Heart left ventricle (tissue), 16 donors: ENCODE measurements at regions of chr17 and their contacts with region 1.

Region 1: DNA sequence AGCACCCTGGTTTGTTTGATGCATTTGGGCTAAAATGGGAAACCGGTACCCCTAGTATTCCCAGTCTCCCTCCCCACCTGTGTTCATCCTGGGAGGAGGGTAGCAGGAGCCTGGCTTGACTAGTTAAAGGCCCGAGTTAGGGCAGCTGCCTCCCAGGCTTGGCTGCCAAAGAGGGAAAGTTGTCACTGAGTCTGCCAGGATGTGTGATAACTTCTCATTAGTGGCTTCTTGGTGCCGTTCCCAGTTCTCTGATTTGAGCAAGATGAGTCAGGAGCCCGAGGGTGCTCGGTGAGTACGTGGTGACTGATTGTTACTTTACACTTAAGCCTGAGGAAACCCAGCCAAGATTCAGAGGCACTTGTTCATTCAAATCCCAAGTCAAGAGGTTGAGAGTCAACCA is 2.5 kb downstream of the KRT32 start:
- DNase-seq: peak in 4 of 5 donors; percentile 68 to 85 (median 78)
- ATAC-seq: peak; percentile 96 to 98 (median 97)
- H3K4me3 ChIP-seq: no peak overlapping the region
- H3K27ac ChIP-seq: no peak overlapping the region
- H3K4me1 ChIP-seq: peaks cover 0 to 11% (median 3%) of the 10 kb centered on the region in 12 donors
- H3K27me3 ChIP-seq: peaks cover 0 to 8% (median 0%) of the 10 kb centered on the region in 9 donors
- CTCF ChIP-seq: no peak
- POLR2A ChIP-seq: no peak

Region 2: DNA sequence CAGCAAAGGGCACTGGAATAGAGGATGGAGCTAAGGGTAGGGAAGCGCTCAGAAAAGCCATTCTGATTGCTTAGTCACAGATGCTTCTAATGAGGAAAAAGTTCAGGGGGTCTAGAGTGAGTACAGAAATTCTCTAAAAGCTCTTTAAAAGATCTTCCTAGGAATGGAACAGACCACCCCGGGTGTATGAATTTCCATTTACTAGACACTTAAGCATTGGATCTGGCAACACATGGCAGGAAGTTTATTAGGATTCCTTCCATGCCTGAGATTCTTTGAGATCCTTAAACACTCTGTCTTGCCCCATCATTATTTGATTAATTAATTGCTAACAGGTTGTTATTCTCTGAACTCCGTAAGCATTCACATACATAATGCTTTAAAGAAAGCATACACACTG is 180.6 kb before region 1 on chr17:
- intact Hi-C with region 1: no loop called
- DNase-seq: no peak
- ATAC-seq: no peak
- H3K4me3 ChIP-seq: no peak overlapping the region
- H3K27ac ChIP-seq: no peak overlapping the region
- H3K4me1 ChIP-seq: no peaks in the 10 kb centered on the region
- H3K27me3 ChIP-seq: peaks cover 0 to 19% (median 0%) of the 10 kb centered on the region in 9 donors
- CTCF ChIP-seq: no peak
- POLR2A ChIP-seq: no peak

Region 3: DNA sequence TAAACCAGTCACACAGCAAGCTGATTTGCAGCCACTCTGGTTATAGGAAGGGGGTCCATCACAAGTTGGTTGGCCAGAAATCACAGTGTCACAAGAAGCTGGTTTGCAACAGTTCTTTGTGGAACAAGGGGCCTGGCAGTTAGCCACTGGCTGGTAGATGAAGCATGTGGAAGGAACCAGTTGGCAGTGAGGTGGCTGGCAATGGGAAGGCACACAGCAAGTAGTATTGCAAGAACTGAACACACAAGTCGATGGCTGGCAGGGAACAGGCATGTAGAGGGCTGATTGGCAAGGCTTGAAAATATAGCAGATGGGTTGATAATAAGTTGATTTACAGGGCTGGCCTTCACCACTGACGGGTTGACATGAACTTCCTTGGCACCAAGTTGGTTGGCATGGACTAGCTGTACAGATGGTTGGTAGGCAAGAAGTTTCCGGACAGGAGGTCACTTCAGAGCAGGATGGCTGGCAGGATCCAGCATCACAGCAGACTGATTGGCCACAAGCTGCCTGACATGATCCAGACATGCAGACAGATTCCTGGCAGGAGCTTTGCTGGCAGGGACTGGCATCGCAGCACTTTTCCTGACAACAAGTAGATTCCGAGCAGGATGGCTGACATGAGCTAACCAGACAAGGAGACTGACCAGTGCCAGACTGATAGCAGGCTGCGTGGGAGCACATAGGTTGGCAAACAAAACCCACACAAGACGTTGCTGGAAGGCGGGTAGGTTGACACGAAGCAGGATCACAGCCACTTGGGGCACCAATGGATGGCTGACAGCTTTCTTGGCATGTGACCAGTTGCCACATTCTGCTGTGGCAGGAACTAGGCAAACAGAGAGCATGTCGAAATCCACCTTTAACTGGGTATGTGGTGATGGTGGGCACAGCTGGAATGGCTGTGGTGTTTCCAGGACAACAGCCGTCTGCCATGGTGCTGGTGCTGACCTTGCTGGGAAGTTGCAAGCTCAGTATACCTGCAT is 162.5 kb before region 1 on chr17 and contains the start of gene KRTAP29-1:
- intact Hi-C with region 1: loop called in 2 of 10 experiments (anchors 2 to 10 kb)
- DNase-seq: peak; percentile 48 to 84 (median 73)
- ATAC-seq: peak; percentile 96 to 97 (median 96)
- H3K4me3 ChIP-seq: no peak within 1 kb of the TSS
- H3K27ac ChIP-seq: peak within 1 kb of the TSS in 2 of 12 donors; percentile 10 to 45
- H3K4me1 ChIP-seq: peaks cover 0 to 13% (median 0%) of the 10 kb centered on the region in 12 donors
- H3K27me3 ChIP-seq: peaks cover 0 to 2% (median 0%) of the 10 kb centered on the region in 9 donors
- CTCF ChIP-seq: no peak
- POLR2A ChIP-seq: no peak
- total RNA-seq, gene KRTAP29-1: not detected

Region 4: DNA sequence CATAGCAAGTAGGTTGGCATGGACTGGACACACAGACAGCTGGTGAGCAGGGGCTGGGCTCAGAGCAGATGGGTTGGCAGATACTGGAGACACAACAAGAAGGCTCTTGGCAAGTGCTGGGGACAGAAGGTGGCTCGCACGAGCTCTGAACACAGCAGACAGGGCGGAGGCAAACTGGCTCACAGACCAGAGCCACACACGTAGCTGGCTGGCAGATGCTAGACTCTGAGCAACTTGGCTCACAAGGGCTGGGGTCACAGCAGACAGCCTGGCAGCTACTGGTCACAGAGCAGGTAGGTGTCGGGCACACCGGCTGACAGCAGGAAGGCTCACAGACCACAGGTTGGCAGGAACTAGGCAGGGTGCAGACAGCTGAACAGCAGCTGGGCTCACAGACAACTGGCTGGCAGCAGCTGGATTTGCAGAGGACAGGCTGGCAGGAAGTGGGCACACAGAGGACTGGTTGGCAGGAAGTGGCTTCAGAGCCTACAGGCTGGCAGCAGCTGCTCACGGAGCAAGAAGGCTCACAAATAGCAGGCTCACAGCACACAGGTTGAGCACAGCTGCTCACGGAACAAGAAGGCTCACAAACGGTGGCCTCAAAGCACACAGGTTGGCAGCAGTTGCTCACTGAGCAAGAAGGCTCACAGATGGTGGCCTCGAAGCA is 156.3 kb before region 1 on chr17:
- intact Hi-C with region 1: loop called in 2 of 10 experiments (anchors 2 to 10 kb)
- DNase-seq: peak in 4 of 5 donors; percentile 49 to 85 (median 68)
- ATAC-seq: peak; percentile 58 to 96 (median 90)
- H3K4me3 ChIP-seq: peak overlapping the region in 1 of 12 donors; percentile 16
- H3K27ac ChIP-seq: peak overlapping the region in 3 of 12 donors; percentile 10 to 84 (median 12)
- H3K4me1 ChIP-seq: peaks cover 0 to 28% (median 0%) of the 10 kb centered on the region in 12 donors
- H3K27me3 ChIP-seq: peaks cover 0 to 2% (median 0%) of the 10 kb centered on the region in 9 donors
- CTCF ChIP-seq: no peak
- POLR2A ChIP-seq: no peak

Region 5: GRCh38 chr17:41417576-41418015 is 47.1 kb before region 1 on chr17:
- intact Hi-C with region 1: no loop called
- DNase-seq: no peak
- ATAC-seq: no peak
- H3K4me3 ChIP-seq: no peak overlapping the region
- H3K27ac ChIP-seq: no peak overlapping the region
- H3K4me1 ChIP-seq: peaks cover 0 to 14% (median 4%) of the 10 kb centered on the region in 12 donors
- H3K27me3 ChIP-seq: no peaks in the 10 kb centered on the region
- CTCF ChIP-seq: peak in 3 of 12 donors; percentile 5 to 8 (median 7)
- POLR2A ChIP-seq: no peak